BJ (cell line): ENCODE measurements at regions of chr11 and their contacts with region 1.

Region 1: DNA sequence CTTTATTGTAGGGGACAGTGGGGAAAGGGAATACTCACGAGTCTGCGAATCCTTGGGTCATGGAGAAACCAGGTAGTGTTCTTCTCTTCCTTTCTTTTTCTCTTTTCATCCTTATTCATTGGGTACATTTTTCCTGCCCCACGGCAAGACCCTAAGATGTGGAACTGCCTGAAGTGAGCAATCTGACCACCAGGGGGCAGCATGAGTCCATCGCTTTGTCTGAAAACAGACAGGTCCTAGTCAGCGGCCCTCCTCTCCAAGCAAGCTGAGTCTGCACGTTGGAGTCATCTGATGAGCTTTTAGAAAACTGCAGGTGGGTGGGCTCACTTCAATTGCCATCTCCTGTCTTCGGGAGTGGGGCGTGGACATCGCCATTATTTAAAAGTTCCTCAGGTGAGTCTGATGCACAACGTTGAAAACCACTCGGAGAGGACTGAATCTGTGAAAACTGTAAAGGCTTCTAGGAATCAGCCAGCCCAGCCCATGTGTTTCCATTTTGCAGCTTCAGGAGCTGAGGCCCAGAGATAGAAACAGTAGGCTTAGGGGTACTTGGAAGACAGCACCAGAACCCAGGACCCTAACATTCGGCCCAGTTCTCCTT is 34.0 kb upstream of the FBXO3 start:
- DNase-seq: no peak
- H3K4me3 ChIP-seq: no peak overlapping the region
- H3K27me3 ChIP-seq: peaks cover 1% of the 10 kb centered on the region
- CTCF ChIP-seq: peak; percentile 91

Region 2: GRCh38 chr11:33778675-33779074 is 29.7 kb before region 1 on chr11:
- CTCF ChIA-PET with region 1: interaction called, 34 read pairs
- POLR2A ChIA-PET with region 1: no interaction called
- DNase-seq: peak; percentile 26
- H3K4me3 ChIP-seq: no peak overlapping the region
- H3K27me3 ChIP-seq: no peaks in the 10 kb centered on the region
- CTCF ChIP-seq: no peak

Region 3: GRCh38 chr11:33790040-33790439 is 18.3 kb before region 1 on chr11:
- CTCF ChIA-PET with region 1: interaction called, 19 read pairs
- POLR2A ChIA-PET with region 1: interaction called, 5 read pairs
- DNase-seq: no peak
- H3K4me3 ChIP-seq: no peak overlapping the region
- H3K27me3 ChIP-seq: peaks cover 7% of the 10 kb centered on the region
- CTCF ChIP-seq: no peak

Region 4: DNA sequence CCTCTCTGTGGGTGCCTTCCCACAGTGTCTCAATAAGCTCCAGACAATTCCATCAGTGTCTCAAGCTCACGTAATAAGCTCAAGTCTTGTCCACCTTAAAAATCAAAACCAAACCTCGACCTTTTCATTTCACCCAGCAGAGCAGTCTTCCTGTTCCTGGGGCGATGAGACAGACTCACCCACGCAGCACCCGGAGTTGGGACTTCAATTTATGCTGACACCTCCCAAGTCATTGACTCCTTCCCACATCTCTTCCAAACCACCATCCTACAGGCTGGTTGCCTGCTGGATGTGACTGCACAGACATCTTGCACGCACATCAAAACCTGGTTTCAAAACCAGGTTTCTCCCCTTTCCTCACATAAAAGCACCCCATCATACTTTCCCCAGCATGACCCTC is 10.9 kb after region 1 on chr11:
- CTCF ChIA-PET with region 1: interaction called, 82 read pairs
- POLR2A ChIA-PET with region 1: no interaction called
- DNase-seq: no peak
- H3K4me3 ChIP-seq: no peak overlapping the region
- H3K27me3 ChIP-seq: peaks cover 40% of the 10 kb centered on the region
- CTCF ChIP-seq: no peak

Region 5: GRCh38 chr11:33829433-33830141 is 21.3 kb after region 1 on chr11:
- CTCF ChIA-PET with region 1: interaction called, 76 read pairs
- POLR2A ChIA-PET with region 1: interaction called, 4 read pairs
- DNase-seq: peak; percentile 11
- H3K4me3 ChIP-seq: peak overlapping the region; percentile 31
- H3K27me3 ChIP-seq: peaks cover 19% of the 10 kb centered on the region; the same call in 1 of the 2 replicates
- CTCF ChIP-seq: peak; percentile 86

Region 6: DNA sequence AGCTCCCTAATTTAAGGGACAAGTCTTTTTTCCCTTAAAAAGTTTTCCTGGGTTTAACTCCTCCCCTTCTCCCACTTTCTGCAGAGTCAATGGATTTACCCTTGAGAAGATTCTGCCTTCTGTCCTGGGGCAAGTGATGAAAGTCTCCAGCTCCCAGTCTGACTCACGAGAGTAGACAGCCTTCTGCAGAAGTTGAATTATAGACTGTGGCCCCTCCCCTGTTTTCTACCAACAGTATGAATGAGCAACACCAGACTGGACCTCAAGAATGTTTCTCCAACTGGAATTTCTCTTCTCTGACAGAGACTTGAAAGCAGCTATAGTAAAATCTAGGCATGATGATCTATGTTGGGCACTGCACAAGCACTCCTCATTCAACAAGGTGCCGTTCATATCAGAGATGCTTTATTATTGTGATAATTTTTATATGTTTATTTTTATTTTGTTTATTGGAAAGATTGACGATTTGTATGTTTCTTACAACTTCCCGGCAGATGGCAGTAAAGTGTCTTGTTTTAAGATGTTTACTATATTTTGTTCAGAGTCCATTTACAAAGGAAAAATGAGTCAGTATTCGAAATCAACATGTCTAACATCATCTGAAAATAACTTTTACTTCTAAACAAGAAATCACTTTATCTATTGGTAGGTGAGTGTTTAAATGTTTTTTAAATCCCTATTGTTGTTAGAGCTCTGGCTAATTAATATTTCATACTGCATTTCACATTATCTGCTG is 27.0 kb after region 1 on chr11:
- CTCF ChIA-PET with region 1: interaction called, 76 read pairs
- POLR2A ChIA-PET with region 1: no interaction called
- DNase-seq: peak; percentile 48
- H3K4me3 ChIP-seq: no peak overlapping the region
- H3K27me3 ChIP-seq: peaks cover 11% of the 10 kb centered on the region
- CTCF ChIP-seq: peak; percentile 33; the same call in 1 of the 2 replicates

Region 7: GRCh38 chr11:33970984-33971466 is 162.7 kb after region 1 on chr11:
- CTCF ChIA-PET with region 1: interaction called, 20 read pairs
- POLR2A ChIA-PET with region 1: no interaction called
- DNase-seq: no peak
- H3K4me3 ChIP-seq: no peak overlapping the region
- H3K27me3 ChIP-seq: peaks cover 4% of the 10 kb centered on the region; the same call in 1 of the 2 replicates
- CTCF ChIP-seq: peak; percentile 65

Region 8: GRCh38 chr11:34037016-34037415 is 228.7 kb after region 1 on chr11:
- CTCF ChIA-PET with region 1: no interaction called
- POLR2A ChIA-PET with region 1: no interaction called
- DNase-seq: no peak
- H3K4me3 ChIP-seq: no peak overlapping the region
- H3K27me3 ChIP-seq: 0 out of 2 replicates have a peak, but pooled peaks cover 2% of the 10 kb centered on the region
- CTCF ChIP-seq: no peak